B cell (primary cell): ENCODE measurements at regions of chr11 and their contacts with region 1.

Region 1: DNA sequence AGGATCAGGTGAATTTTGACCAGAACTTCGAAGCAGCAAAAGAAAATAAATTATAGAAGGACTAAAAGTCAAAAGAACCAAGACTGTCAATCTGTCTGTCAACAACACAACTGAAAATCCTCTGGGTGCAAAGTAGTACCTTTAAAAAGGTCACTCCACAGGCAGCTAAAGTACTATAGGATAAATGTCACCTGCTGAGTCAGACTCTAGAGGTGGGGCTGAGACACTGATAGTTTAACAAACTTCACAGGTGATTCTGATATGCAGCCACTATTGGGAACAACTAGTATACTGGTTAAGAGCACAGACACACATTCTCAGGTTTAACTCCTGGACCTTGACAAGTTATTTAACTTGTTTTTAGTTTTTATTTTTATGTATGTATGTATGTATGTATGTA is 107.3 kb downstream of the FCHSD2 start:
- DNase-seq: no peak
- ATAC-seq: no peak
- H3K4me3 ChIP-seq: no peak overlapping the region
- H3K4me3 Mint-ChIP-seq: peak overlapping the region; percentile 45
- H3K27ac ChIP-seq: peak overlapping the region in 1 of 2 donors; percentile 40
- H3K27ac Mint-ChIP-seq: peak overlapping the region; percentile 81
- H3K4me1 ChIP-seq: peaks cover 11 to 17% of the 10 kb centered on the region in 2 donors
- H3K4me1 Mint-ChIP-seq: peaks cover 55% of the 10 kb centered on the region
- H3K27me3 ChIP-seq: no peaks in the 10 kb centered on the region
- H3K27me3 Mint-ChIP-seq: no peaks in the 10 kb centered on the region
- CTCF ChIP-seq: no peak

Region 2: GRCh38 chr11:72985645-72986044 is 49.1 kb before region 1 on chr11:
- CTCF ChIA-PET with region 1: no interaction called
- POLR2A ChIA-PET with region 1: no interaction called
- intact Hi-C with region 1: loop called (anchors 10 kb)
- DNase-seq: no peak
- ATAC-seq: no peak
- H3K4me3 ChIP-seq: no peak overlapping the region
- H3K4me3 Mint-ChIP-seq: no peak overlapping the region
- H3K27ac ChIP-seq: peak overlapping the region in 1 of 2 donors; percentile 58
- H3K27ac Mint-ChIP-seq: peak overlapping the region; percentile 87
- H3K4me1 ChIP-seq: peaks cover 28 to 44% of the 10 kb centered on the region in 2 donors
- H3K4me1 Mint-ChIP-seq: peaks cover 60% of the 10 kb centered on the region
- H3K27me3 ChIP-seq: no peaks in the 10 kb centered on the region
- H3K27me3 Mint-ChIP-seq: no peaks in the 10 kb centered on the region
- CTCF ChIP-seq: no peak